Activated naive CD4-positive, alpha-beta T cell treated with anti-CD3 and anti-CD28 coated beads for 36 hours (primary cell): ENCODE measurements at regions of chr2 and their contacts with region 1.

Region 1: GRCh38 chr2:230219419-230220331 is at the start of gene SP110:
- DNase-seq: peak; percentile 91
- H3K4me3 Mint-ChIP-seq: peak within 1 kb of the TSS; percentile 99
- H3K27ac Mint-ChIP-seq: peak within 1 kb of the TSS; percentile 99
- H3K4me1 Mint-ChIP-seq: peaks cover 62% of the 10 kb centered on the region
- H3K27me3 Mint-ChIP-seq: no peaks in the 10 kb centered on the region
- total RNA-seq, gene SP110: 85.3 to 88.8 TPM

Region 2: DNA sequence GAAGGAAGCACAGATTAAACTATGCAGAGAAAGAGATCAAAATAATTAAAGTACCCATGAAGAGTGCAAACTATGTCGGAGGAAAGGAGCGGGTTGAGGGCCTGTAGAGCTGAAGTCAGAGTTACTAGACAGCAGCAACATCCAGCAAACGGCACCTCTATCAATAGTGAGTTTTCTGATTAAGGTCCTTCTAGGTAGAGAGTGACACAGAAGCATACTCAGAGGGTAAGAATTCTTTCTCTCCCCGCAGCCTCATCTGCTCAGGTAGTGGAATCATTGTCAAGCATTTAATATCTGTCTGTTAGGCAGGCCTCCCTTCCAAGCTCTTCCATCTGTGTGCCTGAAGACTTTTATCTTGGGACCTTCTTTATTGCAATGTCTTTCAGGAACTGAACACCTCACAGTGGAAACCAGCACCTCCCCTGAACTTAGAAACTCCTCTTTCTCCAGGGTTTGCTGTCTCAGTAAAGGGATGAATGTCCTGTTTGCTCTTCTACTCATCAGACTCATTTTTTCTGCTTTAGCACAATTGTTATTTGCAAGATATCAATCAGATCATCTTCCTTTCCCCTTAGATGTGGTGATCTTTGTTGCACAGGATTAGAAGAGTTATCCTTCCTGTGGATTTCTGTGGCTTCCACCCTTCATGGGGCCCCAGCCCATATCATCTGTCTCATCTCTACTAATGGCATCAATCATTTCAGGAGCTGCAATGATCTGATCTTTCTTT is 34.6 kb after region 1 on chr2:
- CTCF ChIA-PET with region 1: no interaction called
- intact Hi-C with region 1: loop called (anchors 1 kb)
- DNase-seq: peak; percentile 78
- H3K4me3 Mint-ChIP-seq: no peak overlapping the region
- H3K27ac Mint-ChIP-seq: no peak overlapping the region
- H3K4me1 Mint-ChIP-seq: peaks cover 13% of the 10 kb centered on the region
- H3K27me3 Mint-ChIP-seq: no peaks in the 10 kb centered on the region

Region 3: DNA sequence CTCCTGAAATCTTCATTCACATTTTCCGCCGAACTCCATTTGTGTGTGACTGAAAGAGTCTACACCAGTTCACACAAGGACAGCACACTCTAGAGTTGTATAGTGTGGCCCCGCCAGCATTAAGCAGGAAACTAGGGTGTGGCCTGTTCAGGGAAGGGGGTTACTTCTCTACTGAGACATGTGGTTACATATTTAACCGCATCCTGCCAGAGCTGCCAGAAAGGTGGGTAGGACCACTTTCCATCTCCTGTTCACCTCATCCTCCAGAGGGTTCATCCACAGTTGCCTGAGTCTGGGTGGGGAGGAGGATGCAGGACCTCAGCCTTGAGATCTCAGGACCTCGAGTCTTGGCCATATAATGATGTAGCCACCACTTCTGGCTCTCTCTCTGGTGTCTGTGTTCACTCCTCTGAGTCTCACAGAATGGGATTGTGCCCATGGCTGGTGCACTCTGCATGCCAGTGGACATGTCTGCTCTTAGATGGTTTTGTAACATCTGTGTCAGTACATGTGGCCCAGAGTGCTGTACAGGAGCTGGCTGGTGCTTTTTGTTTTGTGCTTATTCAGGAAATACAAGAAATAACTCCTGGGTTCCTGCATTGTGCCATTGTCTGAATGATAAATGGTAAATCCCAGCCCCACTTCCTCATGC is 99.7 kb after region 1 on chr2:
- CTCF ChIA-PET with region 1: no interaction called
- intact Hi-C with region 1: loop called (anchors 1 kb)
- DNase-seq: peak; percentile 87
- H3K4me3 Mint-ChIP-seq: peak overlapping the region; percentile 55
- H3K27ac Mint-ChIP-seq: peak overlapping the region; percentile 93
- H3K4me1 Mint-ChIP-seq: peaks cover 54% of the 10 kb centered on the region
- H3K27me3 Mint-ChIP-seq: no peaks in the 10 kb centered on the region

Region 4: DNA sequence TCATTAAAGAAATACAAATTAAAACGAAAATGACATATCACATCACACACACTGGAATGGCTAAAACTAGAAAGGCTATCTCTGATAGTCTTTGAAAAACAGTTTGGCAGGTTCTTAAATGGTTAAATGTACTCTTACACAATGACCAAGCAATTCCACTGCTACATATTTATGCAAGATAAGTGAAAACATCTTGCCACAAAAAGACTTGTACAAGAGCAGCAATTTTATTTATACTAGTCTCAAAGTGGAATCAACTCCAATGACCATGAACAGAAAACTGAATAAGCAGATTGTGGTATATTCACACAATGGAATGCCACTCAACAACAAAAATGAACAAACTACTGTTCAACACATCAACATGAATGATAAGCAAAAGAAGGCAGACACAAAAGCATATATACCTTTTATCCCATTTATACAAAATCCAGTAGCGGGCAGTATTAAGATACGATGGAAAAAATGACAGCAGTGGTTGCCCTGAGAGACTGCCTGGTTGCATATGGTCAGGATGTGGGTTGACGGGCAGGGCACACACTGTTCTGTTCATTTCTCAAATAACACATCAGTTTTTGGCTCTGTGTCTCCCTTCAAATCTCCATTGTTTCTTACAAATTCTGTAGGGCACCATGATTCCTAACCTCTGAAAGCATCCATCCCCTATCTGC is 221.7 kb after region 1 on chr2:
- CTCF ChIA-PET with region 1: no interaction called
- intact Hi-C with region 1: loop called (anchors 10 kb)
- DNase-seq: peak; percentile 38
- H3K4me3 Mint-ChIP-seq: no peak overlapping the region
- H3K27ac Mint-ChIP-seq: peak overlapping the region; percentile 30
- H3K4me1 Mint-ChIP-seq: peaks cover 52% of the 10 kb centered on the region
- H3K27me3 Mint-ChIP-seq: no peaks in the 10 kb centered on the region

Region 5: GRCh38 chr2:230636684-230637271 is 417.1 kb after region 1 on chr2:
- CTCF ChIA-PET with region 1: no interaction called
- intact Hi-C with region 1: no loop called
- DNase-seq: peak; percentile 49
- H3K4me3 Mint-ChIP-seq: no peak overlapping the region
- H3K27ac Mint-ChIP-seq: peak overlapping the region; percentile 86
- H3K4me1 Mint-ChIP-seq: peaks cover 26% of the 10 kb centered on the region
- H3K27me3 Mint-ChIP-seq: no peaks in the 10 kb centered on the region

Region 6: DNA sequence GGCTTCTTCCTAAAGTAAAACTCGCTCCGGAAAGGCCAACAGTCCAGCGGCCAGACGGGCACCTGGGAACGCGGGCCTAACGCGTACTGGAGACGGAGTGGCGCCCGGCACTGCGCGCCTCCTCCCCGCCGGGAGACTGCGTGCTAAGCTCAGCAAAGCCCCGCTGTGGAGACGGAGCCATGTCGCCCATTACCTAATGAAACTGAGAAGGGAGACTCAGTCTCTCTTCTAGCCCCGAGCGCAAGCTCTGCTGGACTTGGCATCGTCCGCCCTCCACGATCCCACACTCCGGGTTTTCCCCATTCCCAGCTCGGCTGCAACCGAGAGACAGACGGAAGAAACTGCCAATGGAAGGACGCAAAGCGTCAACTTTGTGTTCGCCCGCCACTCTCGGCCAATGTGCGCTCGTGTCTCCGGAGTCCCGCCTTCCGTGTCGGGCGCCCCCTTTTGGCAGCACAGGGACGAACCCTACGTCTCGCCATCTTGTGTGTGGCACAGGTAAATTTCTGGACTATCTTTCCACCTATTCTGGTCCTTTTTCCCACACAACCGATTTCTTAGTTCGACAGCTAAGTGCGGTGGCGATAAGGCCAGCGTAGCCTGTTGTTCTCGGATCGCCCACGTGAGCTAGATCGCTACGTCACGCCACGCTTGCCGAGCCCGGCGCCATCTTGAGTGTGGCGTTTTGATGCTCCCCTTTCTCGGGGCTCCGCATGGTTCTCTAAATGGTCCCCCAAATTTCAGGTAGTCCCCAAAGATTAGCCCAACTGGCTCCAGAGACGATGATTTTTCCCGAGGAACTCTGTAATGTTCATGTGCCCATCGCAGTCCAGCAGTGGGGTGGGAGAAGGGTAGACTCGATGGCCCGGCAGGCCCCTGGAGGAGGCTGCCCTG is 1487.3 kb after region 1 on chr2:
- CTCF ChIA-PET with region 1: no interaction called
- intact Hi-C with region 1: loop called (anchors 5 kb)
- DNase-seq: peak; percentile 98
- H3K4me3 Mint-ChIP-seq: peak overlapping the region; percentile 91
- H3K27ac Mint-ChIP-seq: peak overlapping the region; percentile 100
- H3K4me1 Mint-ChIP-seq: peaks cover 18% of the 10 kb centered on the region
- H3K27me3 Mint-ChIP-seq: peaks cover 2% of the 10 kb centered on the region